ENCODE measurements at regions of chr14 and their contacts with region 1.

Region 1: DNA sequence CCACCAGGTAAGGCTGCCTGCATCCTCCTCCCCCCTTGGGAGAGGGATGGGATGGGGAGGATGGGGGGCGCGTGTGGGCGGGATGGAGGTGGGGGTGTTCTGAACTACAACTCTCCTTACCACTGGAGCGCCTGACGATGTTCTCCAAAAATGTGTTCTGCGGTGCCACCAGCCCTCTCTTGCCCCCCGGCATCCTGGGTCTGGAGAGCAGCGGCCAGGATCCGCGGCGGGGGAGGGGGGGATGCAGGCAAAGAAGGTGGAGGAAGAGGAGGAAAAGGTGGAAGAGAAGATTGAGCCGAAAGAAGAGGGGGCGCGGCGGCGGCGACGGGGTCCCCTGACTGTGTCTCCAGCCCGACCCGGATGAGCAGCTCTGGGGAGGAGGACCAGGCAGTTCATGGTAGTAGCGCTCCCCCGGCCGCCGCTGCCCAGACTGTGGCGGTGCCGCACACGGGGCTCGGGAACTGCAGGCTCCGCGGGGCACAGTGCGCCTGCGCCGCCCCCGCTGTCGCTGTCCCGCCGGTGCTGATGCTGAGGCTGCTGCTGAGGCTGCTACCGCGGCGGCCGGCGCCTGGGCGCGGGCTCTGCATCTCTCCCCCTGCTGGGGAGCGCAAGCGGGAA is at the start of gene KCNH5:
- DNase-seq: peak; percentile 35
- ATAC-seq: peak; percentile 72 to 89
- total RNA-seq, gene KCNH5: 0.08 to 0.29 TPM

Region 2: DNA sequence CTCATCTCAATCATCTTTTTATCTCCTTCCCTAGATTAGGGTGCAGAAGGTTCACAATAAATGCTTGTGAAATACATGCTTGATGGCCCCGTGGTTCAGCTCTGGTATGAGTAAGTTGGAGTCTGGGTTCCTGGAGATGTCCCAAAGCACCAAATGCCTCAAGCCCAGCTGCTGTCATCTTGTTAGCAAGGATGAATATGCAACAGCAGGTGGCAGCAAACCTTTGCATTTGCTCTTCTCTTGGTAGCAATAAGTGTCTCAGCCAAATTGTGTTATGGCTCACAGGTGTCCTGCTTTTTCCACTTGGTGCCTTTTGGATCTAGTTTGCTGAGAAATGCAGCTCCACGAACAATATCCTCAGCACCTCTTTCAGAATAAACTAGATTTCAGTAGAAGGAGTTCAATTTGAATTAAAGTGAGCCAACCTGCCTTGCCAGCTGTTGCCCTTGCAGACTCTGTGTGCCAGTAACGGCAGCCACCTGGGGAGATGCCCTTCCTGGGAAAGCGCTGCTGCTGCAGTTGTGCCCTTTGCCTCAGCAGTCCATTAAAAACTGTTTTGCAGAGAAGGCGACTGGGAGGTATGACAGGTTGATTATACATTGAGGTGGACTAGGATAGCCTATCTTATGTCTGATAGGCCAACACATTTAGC is 865.6 kb before region 1 on chr14:
- intact Hi-C with region 1: loop called in 1 of 2 experiments (anchors 5 kb)
- DNase-seq: peak; percentile 46
- ATAC-seq: peak; percentile 67 to 74